ENCODE measurements at regions of chr15 and their contacts with region 1.

Region 1: DNA sequence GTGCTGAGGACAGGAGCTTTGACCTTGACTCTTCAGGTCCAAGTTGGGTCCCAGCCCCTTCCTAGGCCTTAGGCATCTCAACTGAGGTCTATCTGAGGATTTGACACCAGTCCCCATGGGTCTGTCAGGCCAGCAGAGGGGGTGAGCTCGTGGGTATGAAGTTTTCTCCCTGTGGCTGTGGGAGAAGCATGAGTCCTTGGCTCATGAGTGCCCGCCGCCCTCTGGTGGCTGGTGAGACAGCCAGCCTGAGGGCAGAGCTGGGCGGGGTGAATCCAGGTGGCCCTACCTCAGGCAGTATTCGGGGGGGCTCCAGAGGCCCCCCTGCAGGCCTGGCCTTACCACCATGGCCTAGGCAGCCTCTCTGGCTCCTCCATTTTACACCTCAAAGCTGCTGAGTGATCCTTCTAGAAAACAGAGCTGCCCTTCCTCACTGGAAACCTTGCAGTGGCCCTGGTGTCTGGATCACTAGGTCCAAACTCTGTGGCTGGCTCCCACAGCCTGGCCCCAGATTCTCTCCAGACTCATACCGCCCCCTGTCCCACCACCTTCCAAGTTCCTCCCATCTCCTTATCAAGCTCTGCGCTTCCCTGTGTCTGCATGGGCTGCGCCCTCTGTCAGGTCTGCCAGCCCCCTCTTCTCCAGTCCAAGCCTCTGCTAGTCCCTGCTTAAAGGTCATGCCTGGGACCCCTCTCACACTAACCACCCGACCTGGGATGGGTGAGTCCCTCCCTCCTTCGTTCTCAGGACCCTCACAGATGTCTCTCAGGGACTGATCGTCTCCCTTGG is 16.1 kb downstream of the SH2D7 start:
- DNase-seq: peak; percentile 85
- CTCF ChIP-seq: peak; percentile 94

Region 2: GRCh38 chr15:77959432-77959879 is 149.0 kb before region 1 on chr15:
- CTCF ChIA-PET with region 1: interaction called, 119 read pairs
- POLR2A ChIA-PET with region 1: no interaction called
- DNase-seq: peak; percentile 85
- CTCF ChIP-seq: peak; percentile 96

Region 3: GRCh38 chr15:78007911-78008886 is 100.3 kb before region 1 on chr15:
- CTCF ChIA-PET with region 1: interaction called, 16 read pairs
- POLR2A ChIA-PET with region 1: no interaction called
- DNase-seq: no peak
- CTCF ChIP-seq: no peak

Region 4: DNA sequence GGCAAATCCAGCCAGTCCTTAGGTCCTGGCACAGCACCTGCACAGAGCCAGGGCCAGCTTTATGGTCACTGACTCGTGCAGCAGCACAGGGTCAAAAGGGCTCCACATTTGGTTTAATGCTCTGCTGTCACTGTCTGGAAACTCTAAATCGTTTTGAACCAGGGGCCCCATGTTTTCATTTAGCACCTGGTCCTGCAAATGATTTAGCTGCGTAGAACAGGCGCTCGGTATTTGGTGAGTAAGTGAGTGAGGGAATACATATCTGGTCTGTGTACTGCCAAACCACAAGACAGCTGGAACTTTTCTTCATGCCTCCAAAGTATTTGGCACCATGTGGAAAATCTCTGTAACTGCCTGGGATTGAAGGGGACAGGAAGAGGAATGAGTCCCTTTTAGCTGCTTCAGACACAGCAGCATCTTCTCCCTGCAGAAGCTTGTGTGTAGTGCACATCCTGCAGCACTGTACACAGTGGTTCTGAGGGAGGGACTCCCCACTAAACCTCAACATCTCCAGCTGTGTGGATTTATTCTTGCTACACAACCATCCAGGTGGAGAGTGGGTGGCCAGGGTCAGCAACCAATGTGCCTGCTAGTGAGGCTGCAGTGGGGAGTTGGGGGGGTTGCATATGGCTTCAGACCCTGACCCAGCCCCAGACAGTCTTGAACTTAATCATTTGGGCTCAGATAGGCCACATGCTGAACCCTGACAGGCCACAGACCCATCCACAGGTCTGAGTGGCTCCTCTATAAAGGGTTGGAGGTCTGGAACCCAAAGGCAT is 15.1 kb before region 1 on chr15:
- CTCF ChIA-PET with region 1: interaction called, 24 read pairs
- POLR2A ChIA-PET with region 1: no interaction called
- DNase-seq: no peak
- CTCF ChIP-seq: no peak

Region 5: GRCh38 chr15:78140292-78140691 is 31.8 kb after region 1 on chr15:
- CTCF ChIA-PET with region 1: interaction called, 19 read pairs
- POLR2A ChIA-PET with region 1: no interaction called
- DNase-seq: no peak
- CTCF ChIP-seq: no peak

Region 6: DNA sequence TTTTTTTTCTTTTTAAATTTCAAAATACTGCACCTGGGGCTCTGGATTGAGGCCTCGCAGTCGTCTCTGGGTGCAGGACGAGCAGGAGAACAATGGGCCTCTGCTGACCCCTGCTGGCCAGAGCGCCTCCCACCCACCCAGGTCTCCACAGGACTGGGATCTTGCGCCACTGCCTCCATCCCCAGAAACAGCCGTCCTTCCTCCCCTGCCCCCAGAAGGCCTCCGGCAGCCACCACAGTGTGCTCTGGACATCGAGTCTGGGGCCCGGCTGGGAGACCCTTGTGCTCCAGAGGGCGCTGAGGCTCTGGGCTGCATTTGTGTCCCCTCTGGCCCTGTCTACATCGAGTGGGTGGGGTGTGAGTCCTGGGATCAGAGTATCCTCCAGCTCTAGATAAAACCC is 132.5 kb after region 1 on chr15:
- CTCF ChIA-PET with region 1: interaction called, 117 read pairs
- POLR2A ChIA-PET with region 1: no interaction called
- DNase-seq: peak; percentile 90
- CTCF ChIP-seq: peak; percentile 81

Region 7: GRCh38 chr15:79978655-79979514 is 1870.4 kb after region 1 on chr15:
- CTCF ChIA-PET with region 1: no interaction called
- POLR2A ChIA-PET with region 1: no interaction called
- DNase-seq: peak; percentile 56
- CTCF ChIP-seq: no peak